ENCODE measurements at regions of chr2 and their contacts with region 1.

Region 1: GRCh38 chr2:68943581-68944568 is 8.8 kb downstream of the GKN2 start:
- DNase-seq: peak; percentile 72
- ATAC-seq: peak; percentile 94
- H3K4me3 ChIP-seq: peak overlapping the region; percentile 25 to 66 (median 31); a peak in 5 of 6 replicates
- H3K27ac ChIP-seq: no peak overlapping the region
- H3K4me1 ChIP-seq: peaks cover 18% of the 10 kb centered on the region
- H3K27me3 ChIP-seq: no peaks in the 10 kb centered on the region; a peak in 2 of 5 replicates
- CTCF ChIP-seq: peak; percentile 91
- EP300 ChIP-seq: peak in 1 of 2 experiments; percentile 8; a peak in 1 of 4 replicates
- POLR2A ChIP-seq: no peak
- RAD21 ChIP-seq: peak; percentile 70

Region 2: GRCh38 chr2:68796294-68796905 is 147.5 kb before region 1 on chr2:
- CTCF ChIA-PET with region 1: no interaction called
- POLR2A ChIA-PET with region 1: no interaction called
- in situ Hi-C with region 1: no loop called
- intact Hi-C with region 1: no loop called
- DNase-seq: no peak
- ATAC-seq: no peak
- H3K4me3 ChIP-seq: no peak overlapping the region
- H3K27ac ChIP-seq: no peak overlapping the region
- H3K4me1 ChIP-seq: no peaks in the 10 kb centered on the region
- H3K27me3 ChIP-seq: peaks cover 4 to 24% of the 10 kb centered on the region in 2 experiments; a peak in 3 of 5 replicates
- CTCF ChIP-seq: no peak
- EP300 ChIP-seq: no peak
- POLR2A ChIP-seq: no peak
- RAD21 ChIP-seq: no peak

Region 3: DNA sequence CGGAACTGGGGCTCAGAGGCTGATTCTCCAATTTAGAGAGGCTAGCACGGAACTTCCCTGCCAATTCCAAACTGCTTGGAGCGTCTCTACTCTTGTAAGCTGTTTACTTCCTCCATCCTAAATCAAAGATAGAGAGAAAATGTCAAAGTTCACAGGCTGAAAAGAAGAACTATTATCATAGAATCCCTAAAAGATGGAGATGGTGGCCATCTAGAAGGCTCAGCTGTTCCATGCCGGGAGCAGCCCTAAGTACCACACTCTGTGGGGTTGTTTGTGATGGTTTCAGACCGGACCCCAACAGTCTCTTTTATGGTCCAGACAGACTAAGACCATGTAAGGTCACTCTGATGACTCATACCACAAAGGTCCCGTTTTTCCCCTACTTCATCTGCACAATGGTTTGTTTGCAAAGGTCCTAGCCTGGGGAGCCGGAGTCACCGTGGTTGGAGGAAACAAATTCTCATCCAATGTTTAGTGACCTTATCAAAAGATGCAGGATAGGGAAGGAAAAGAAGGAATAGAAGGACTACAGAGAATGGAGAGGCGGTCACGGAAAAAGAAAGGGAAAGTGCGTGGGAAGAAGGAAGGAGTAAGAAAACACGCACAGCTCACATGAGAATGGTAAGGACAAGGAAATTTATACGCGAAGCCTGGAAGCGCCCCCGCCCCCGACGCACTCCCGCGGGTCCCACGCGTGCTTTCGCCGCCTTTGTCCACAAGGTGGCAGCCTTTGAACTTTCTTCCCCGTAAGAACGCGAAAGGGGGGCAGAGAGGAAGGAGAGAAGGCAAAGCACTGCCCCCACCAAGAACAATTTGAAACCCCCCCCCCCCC is 68.7 kb after region 1 on chr2:
- CTCF ChIA-PET with region 1: interaction called, 3 read pairs
- POLR2A ChIA-PET with region 1: no interaction called
- in situ Hi-C with region 1: no loop called
- intact Hi-C with region 1: loop called (anchors 1 kb)
- DNase-seq: peak; percentile 66
- ATAC-seq: peak; percentile 55
- H3K4me3 ChIP-seq: peak overlapping the region; percentile 67 to 94 (median 72)
- H3K27ac ChIP-seq: no peak overlapping the region
- H3K4me1 ChIP-seq: peaks cover 36% of the 10 kb centered on the region
- H3K27me3 ChIP-seq: peaks cover 0 to 16% of the 10 kb centered on the region in 2 experiments; a peak in 3 of 5 replicates
- CTCF ChIP-seq: peak; percentile 84
- EP300 ChIP-seq: no peak
- POLR2A ChIP-seq: no peak
- RAD21 ChIP-seq: no peak